MCF 10A (cell line): ENCODE measurements at regions of chr10 and their contacts with region 1.

Region 1: DNA sequence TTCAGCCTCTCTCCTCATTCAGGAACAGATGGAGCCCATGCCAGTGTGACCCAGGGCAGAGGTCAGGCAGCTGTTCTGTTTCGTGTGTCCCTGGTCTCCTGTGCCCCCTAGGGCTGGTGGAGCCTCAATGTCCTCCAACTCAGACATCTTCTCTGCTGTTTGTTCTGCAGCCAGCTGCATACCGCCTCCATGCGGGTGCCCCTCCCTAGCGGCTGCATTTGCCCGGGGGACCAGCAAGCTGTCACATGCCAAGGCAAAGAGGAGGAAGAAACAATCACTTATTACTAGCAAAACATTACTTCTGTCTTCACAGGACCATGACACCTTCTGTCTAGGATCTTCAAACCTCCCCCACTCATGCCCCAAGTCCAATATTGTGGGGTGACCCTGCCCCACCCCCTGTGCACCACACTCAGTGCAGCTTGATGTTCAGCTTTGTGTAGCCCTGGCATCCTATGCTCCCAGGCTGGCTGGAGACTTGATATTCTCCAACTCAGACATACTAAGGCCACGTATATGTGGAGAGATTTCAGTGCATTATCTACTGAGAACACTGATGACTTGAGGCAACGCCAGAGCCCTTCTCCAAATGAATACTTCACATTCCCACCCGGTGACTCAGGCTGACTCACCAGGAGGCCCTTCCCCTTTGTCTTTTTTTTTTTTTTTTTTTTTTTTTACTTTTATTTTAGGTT is 188.9 kb downstream of the SKIDA1 start:
- DNase-seq: peak; percentile 97
- H3K4me3 Mint-ChIP-seq: peak overlapping the region; percentile 54
- H3K27ac Mint-ChIP-seq: peak overlapping the region; percentile 83
- H3K4me1 Mint-ChIP-seq: peaks cover 40% of the 10 kb centered on the region
- H3K27me3 Mint-ChIP-seq: no peaks in the 10 kb centered on the region
- CTCF ChIP-seq: peak; percentile 8

Region 2: DNA sequence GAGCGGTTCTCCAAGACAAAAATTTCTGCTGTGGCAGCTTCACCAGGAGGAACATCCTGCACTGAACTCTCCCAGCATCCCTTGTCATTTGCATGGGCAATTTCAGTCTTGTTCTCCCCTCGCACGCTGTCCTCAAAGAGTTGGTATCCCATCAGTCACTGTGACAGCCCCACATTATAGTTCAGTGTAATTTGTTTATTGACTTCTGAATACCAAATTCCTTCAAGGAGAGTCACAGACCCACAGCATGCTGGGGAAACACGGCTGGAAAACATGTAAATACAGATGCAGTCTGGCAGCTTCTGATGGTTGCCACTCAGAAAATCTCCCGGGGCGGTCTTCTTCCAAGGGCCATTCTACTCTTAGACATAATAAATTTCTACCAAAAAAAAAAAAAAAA is 288.6 kb before region 1 on chr10:
- CTCF ChIA-PET with region 1: no interaction called
- POLR2A ChIA-PET with region 1: no interaction called
- intact Hi-C with region 1: no loop called
- DNase-seq: peak; percentile 66
- H3K4me3 Mint-ChIP-seq: no peak overlapping the region
- H3K27ac Mint-ChIP-seq: peak overlapping the region; percentile 50
- H3K4me1 Mint-ChIP-seq: peaks cover 27% of the 10 kb centered on the region
- H3K27me3 Mint-ChIP-seq: no peaks in the 10 kb centered on the region
- CTCF ChIP-seq: no peak

Region 3: GRCh38 chr10:21292763-21293517 is 43.7 kb before region 1 on chr10:
- CTCF ChIA-PET with region 1: interaction called, 4 read pairs
- POLR2A ChIA-PET with region 1: interaction called, 9 read pairs
- intact Hi-C with region 1: loop called (anchors 1 kb)
- DNase-seq: peak; percentile 96
- H3K4me3 Mint-ChIP-seq: peak overlapping the region; percentile 63
- H3K27ac Mint-ChIP-seq: peak overlapping the region; percentile 66
- H3K4me1 Mint-ChIP-seq: peaks cover 23% of the 10 kb centered on the region
- H3K27me3 Mint-ChIP-seq: no peaks in the 10 kb centered on the region
- CTCF ChIP-seq: no peak

Region 4: GRCh38 chr10:21315645-21316281 is 20.9 kb before region 1 on chr10:
- CTCF ChIA-PET with region 1: interaction called, 3 read pairs
- POLR2A ChIA-PET with region 1: interaction called, 19 read pairs
- intact Hi-C with region 1: no loop called
- DNase-seq: peak; percentile 94
- H3K4me3 Mint-ChIP-seq: peak overlapping the region; percentile 6
- H3K27ac Mint-ChIP-seq: peak overlapping the region; percentile 61
- H3K4me1 Mint-ChIP-seq: peaks cover 31% of the 10 kb centered on the region
- H3K27me3 Mint-ChIP-seq: no peaks in the 10 kb centered on the region
- CTCF ChIP-seq: no peak

Region 5: GRCh38 chr10:21364196-21365114 is 27.8 kb after region 1 on chr10:
- CTCF ChIA-PET with region 1: interaction called, 3 read pairs
- POLR2A ChIA-PET with region 1: interaction called, 53 read pairs
- intact Hi-C with region 1: loop called (anchors 2 kb)
- DNase-seq: peak; percentile 94
- H3K4me3 Mint-ChIP-seq: peak overlapping the region; percentile 60
- H3K27ac Mint-ChIP-seq: peak overlapping the region; percentile 92
- H3K4me1 Mint-ChIP-seq: peaks cover 50% of the 10 kb centered on the region
- H3K27me3 Mint-ChIP-seq: no peaks in the 10 kb centered on the region
- CTCF ChIP-seq: no peak

Region 6: DNA sequence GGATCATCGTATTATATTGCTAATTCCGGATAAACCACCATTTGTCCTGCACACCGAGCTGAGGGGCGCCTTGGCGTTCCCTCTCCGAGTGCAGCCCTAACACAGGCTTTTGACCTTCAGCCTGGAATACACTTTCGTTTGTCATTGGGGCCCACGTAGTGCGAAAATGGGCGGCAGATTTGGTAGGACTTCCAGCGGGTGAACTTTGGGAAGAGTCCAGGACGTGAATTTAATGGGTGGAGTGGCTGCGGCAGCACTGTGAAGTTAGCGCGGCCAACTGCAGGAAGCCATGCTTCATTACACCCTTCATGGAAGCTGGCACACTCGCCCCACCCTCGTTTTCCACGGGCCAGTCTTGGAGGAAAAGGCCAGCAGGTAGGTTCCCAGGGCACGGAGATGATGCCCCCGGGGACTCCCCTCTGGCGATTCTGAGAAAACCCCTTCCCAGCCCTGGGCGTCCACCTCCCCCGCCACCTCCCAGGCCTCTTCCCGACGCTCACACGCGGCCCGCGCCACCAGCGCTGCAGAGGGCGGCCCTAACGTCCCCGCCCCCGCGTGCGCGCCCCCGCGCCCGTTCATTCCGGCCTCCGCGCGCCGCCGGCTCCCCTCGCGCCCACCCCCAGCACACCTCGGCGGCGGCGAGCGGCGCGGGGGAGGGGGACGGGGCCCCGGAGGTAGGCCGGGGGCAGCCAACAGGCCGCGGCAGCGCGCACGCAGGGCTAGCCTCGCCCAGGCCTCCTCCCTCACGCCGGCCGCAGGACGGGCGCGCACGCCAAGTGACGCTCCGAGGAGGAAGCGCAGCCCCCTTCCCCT is 197.1 kb after region 1 on chr10 and contains the start of gene MLLT10:
- CTCF ChIA-PET with region 1: no interaction called
- POLR2A ChIA-PET with region 1: interaction called, 3 read pairs
- intact Hi-C with region 1: loop called (anchors 5 kb)
- DNase-seq: peak; percentile 94
- H3K4me3 Mint-ChIP-seq: peak within 1 kb of the TSS; percentile 84
- H3K27ac Mint-ChIP-seq: peak within 1 kb of the TSS; percentile 97
- H3K4me1 Mint-ChIP-seq: peaks cover 6% of the 10 kb centered on the region
- H3K27me3 Mint-ChIP-seq: no peaks in the 10 kb centered on the region
- CTCF ChIP-seq: no peak
- total RNA-seq, gene MLLT10: 39.3 and 47.5 TPM in 2 replicates